Activated naive CD4-positive, alpha-beta T cell treated with anti-CD3 and anti-CD28 coated beads for 36 hours (primary cell): ENCODE measurements at regions of chr12 and their contacts with region 1.

Region 1: GRCh38 chr12:56224102-56224701 is at the start of gene NABP2:
- DNase-seq: peak; percentile 97
- H3K4me3 Mint-ChIP-seq: peak within 1 kb of the TSS; percentile 99
- H3K27ac Mint-ChIP-seq: peak within 1 kb of the TSS; percentile 93
- H3K4me1 Mint-ChIP-seq: peaks cover 37% of the 10 kb centered on the region
- H3K27me3 Mint-ChIP-seq: no peaks in the 10 kb centered on the region
- total RNA-seq, gene NABP2: 57.4 to 59.0 TPM

Region 2: DNA sequence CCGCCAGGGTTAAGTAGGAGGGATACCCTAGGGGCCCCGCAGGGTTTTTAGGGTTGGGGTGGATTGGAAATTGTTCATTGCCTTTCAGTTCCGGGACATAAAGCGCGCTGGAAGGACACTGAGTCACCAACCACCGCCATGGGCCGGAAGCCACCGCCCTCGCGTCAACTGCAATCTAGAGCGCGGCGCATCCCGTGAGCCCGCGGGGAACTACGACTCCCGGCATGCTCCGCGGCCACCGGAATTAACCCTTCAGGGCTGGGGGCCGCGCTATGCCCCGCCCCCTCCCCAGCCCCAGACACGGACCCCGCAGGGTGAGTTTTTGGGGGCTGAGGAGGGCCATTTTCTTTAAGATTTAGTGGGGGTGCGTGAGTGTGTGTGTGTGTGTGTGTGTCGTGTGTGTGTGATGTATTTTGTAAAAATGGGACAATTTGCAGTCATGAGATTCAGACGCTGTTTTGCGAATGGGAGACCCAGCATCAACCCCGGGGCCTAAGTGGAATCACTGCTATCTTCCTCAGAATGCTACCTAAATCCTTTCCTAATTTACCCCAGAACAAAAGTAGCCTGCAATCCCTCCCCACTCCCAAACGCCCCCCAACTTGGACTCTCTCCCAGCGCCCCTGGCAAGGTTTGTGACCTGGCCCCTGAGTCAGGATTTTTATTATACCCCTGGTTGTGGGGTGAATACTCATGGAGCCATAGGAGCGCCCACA is 71.7 kb before region 1 on chr12 and contains the start of gene MYL6B:
- CTCF ChIA-PET with region 1: no interaction called
- intact Hi-C with region 1: loop called (anchors 2 kb)
- DNase-seq: peak; percentile 98
- H3K4me3 Mint-ChIP-seq: peak within 1 kb of the TSS; percentile 84
- H3K27ac Mint-ChIP-seq: peak within 1 kb of the TSS; percentile 98
- H3K4me1 Mint-ChIP-seq: peaks cover 37% of the 10 kb centered on the region
- H3K27me3 Mint-ChIP-seq: no peaks in the 10 kb centered on the region
- total RNA-seq, gene MYL6B: 49.2 to 57.5 TPM

Region 3: DNA sequence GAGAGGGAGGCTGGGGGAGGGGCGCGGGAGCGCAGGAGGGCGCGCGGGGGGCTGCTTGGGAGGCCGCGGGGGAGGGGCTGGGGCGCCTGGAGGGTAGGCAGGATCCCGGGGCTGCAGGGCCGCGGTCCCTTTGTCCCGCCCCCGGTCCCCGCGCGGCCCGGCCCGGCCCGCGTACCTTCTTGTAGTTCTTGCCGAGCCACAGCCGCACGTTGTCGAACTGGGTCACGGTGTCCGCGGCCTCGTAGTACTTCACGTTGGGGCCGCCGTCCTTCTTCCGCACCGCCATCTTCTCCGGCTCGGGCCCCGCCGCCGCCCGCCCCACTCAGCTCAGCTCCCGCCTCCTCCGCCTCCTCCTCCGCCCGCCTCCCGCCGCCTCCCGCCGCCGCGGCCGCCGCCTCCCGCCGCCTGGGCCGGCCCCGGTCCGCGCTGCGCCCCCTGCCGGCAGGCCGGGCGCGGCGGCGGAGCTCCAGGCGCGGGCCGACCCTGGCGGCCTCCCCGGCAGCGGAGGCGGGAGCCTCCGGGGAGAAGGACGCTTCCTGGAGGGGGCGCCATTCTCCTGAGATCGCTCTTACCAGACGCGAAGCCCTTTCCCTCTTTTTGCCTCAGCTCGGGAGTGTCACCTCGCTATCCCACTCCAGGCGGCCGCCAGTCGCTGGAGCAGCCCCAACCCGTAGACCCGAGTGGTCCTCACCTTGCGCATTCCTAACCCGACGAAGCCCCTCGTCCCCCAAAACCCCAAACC is 34.9 kb before region 1 on chr12 and contains the start of gene SMARCC2:
- CTCF ChIA-PET with region 1: interaction called, 22 read pairs
- intact Hi-C with region 1: loop called (anchors 1 kb)
- DNase-seq: peak; percentile 93
- H3K4me3 Mint-ChIP-seq: peak within 1 kb of the TSS; percentile 95
- H3K27ac Mint-ChIP-seq: peak within 1 kb of the TSS; percentile 92
- H3K4me1 Mint-ChIP-seq: peaks cover 33% of the 10 kb centered on the region
- H3K27me3 Mint-ChIP-seq: no peaks in the 10 kb centered on the region
- total RNA-seq, gene SMARCC2: 75.8 to 79.0 TPM

Region 4: GRCh38 chr12:56258057-56258819 is 34.0 kb after region 1 on chr12 and contains the start of gene ANKRD52:
- CTCF ChIA-PET with region 1: interaction called, 10 read pairs
- intact Hi-C with region 1: loop called (anchors 1 kb)
- DNase-seq: peak; percentile 72
- H3K4me3 Mint-ChIP-seq: peak within 1 kb of the TSS; percentile 83
- H3K27ac Mint-ChIP-seq: peak within 1 kb of the TSS; percentile 59
- H3K4me1 Mint-ChIP-seq: peaks cover 18% of the 10 kb centered on the region
- H3K27me3 Mint-ChIP-seq: no peaks in the 10 kb centered on the region
- total RNA-seq, gene ANKRD52: 23.6 to 25.6 TPM

Region 5: DNA sequence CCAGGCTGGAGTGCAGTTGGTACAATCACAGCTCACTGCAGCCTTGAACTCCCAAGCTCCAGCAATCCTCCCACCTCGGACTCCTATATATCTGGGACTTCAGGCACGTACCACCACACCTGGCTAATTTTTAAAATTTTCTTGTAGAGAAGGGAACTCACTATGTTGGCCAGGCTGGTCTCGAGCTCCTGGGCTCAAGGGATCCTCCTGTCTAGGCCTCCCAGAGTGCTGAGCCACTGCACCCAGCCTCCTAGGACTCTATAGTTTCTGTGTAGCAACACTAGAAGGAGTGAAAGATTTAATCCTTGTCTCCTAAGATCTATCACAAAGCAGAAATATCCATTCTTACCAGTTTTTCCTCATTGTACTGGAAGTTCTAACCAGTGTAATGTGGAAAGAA is 142.7 kb after region 1 on chr12:
- CTCF ChIA-PET with region 1: no interaction called
- intact Hi-C with region 1: no loop called
- DNase-seq: no peak
- H3K4me3 Mint-ChIP-seq: no peak overlapping the region
- H3K27ac Mint-ChIP-seq: no peak overlapping the region
- H3K4me1 Mint-ChIP-seq: no peaks in the 10 kb centered on the region
- H3K27me3 Mint-ChIP-seq: no peaks in the 10 kb centered on the region

Region 6: DNA sequence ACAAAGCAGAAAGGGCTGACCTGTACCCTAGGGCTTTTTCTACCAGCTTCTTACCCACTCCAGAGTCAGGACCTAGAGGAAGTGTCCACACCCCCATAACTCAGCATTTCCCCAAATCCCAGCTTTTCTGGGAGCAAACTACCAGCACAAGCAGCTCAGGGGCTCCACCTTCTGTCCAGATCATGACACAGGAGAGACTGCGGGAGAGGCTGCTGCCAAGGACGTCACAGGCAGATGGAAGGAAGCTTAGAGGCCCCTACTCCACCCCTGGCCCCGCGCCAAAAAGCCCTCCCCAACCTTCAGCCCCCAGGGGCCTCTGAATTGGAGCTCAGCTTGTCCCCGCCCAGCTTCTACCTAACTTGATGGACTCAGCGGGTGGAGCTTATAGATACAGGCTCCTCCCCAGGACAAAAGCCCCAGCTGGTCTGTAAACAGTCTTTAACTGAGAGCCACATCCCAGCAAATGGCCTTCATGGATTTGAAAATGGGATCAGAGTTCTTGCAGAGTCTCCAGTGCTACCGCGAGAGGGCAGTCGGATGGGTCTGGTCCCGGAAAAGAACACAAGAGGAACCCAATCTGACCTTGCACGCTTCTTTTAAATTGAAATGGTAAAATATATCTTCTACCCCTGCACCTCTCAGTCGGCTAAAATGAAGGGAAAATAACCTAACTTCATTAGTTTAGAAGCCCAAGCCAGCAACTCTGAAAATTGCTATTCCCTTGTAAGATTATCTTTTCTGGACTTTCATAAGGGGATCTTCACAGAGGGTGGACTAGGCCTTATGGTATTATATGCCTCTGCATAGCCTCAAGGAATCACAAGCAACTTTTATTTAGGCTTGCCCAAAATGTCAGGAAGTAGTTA is 412.7 kb after region 1 on chr12:
- CTCF ChIA-PET with region 1: no interaction called
- intact Hi-C with region 1: loop called (anchors 5 kb)
- DNase-seq: peak; percentile 97
- H3K4me3 Mint-ChIP-seq: peak overlapping the region; percentile 86
- H3K27ac Mint-ChIP-seq: peak overlapping the region; percentile 91
- H3K4me1 Mint-ChIP-seq: peaks cover 62% of the 10 kb centered on the region
- H3K27me3 Mint-ChIP-seq: no peaks in the 10 kb centered on the region